ENCODE measurements at regions of chr1 and their contacts with region 1.

Region 1: GRCh38 chr1:6317098-6317760 is 56.3 kb upstream of the GPR153 start:
- DNase-seq: no peak
- H3K4me3 ChIP-seq: no peak overlapping the region
- H3K27ac ChIP-seq: no peak overlapping the region
- H3K4me1 ChIP-seq: no peaks in the 10 kb centered on the region
- H3K27me3 ChIP-seq: no peaks in the 10 kb centered on the region
- CTCF ChIP-seq: no peak
- EP300 ChIP-seq: no peak
- POLR2A ChIP-seq: no peak
- RAD21 ChIP-seq: no peak

Region 2: GRCh38 chr1:6330410-6330911 is 13.2 kb after region 1 on chr1:
- CTCF ChIA-PET with region 1: interaction called, 17 read pairs
- POLR2A ChIA-PET with region 1: no interaction called
- DNase-seq: no peak
- H3K4me3 ChIP-seq: no peak overlapping the region
- H3K27ac ChIP-seq: no peak overlapping the region
- H3K4me1 ChIP-seq: peaks cover 0 to 2% (median under 1%) of the 10 kb centered on the region in 4 experiments; a peak in 3 of 7 replicates
- H3K27me3 ChIP-seq: no peaks in the 10 kb centered on the region
- CTCF ChIP-seq: no peak
- EP300 ChIP-seq: no peak
- POLR2A ChIP-seq: no peak
- RAD21 ChIP-seq: no peak

Region 3: GRCh38 chr1:6414443-6414844 is 97.2 kb after region 1 on chr1:
- CTCF ChIA-PET with region 1: interaction called, 11 read pairs
- POLR2A ChIA-PET with region 1: no interaction called
- DNase-seq: peak in 1 of 2 experiments; percentile 86
- H3K4me3 ChIP-seq: no peak overlapping the region; a peak in 1 of 8 replicates
- H3K27ac ChIP-seq: no peak overlapping the region
- H3K4me1 ChIP-seq: peaks cover 2 to 10% (median 5%) of the 10 kb centered on the region in 4 experiments; a peak in 6 of 7 replicates
- H3K27me3 ChIP-seq: peaks cover 29 to 52% (median 50%) of the 10 kb centered on the region in 4 experiments
- CTCF ChIP-seq: peak; percentile 79 to 91 (median 88)
- EP300 ChIP-seq: peak in 1 of 2 experiments; percentile 72; a peak in 1 of 3 replicates
- POLR2A ChIP-seq: no peak
- RAD21 ChIP-seq: peak; percentile 43 to 66